ENCODE measurements at regions of chr5 and their contacts with region 1.

Region 1: GRCh38 chr5:55146543-55147151 is 13.3 kb upstream of the GPX8 start:
- DNase-seq: peak in 1 of 2 donors; percentile 87
- H3K4me3 ChIP-seq: no peak overlapping the region
- H3K27ac ChIP-seq: no peak overlapping the region
- H3K4me1 ChIP-seq: no peaks in the 10 kb centered on the region
- H3K27me3 ChIP-seq: no peaks in the 10 kb centered on the region
- CTCF ChIP-seq: peak; percentile 75 to 89 (median 88)

Region 2: DNA sequence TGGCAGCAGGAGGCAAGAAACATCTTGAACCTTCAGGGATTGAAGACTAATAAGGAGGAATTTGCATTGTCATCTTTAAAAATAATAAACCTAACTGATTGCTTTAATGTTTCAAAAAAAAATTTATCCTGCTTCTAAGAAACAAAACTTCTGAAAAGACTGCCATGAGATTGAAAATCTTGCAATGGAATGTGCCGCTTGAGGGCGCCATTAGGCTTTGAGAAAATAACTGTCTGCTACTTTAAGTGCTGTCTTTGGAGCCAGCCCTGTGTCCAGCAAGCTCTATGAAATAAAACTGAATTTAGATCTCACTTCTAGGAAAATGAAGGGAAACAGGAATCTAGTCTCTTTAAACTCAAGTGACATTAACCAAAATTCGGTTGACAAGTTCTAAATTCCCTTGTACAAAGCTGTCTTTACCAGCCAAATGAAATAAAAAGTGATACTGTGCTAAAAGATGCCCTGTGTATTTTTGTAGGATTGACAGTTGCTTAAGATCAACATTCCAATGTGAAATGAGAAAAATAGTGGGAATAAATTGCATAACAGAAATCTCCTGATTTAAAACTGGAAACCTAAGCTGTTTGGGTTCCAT is 240.6 kb before region 1 on chr5:
- intact Hi-C with region 1: loop called (anchors 1 kb)
- DNase-seq: peak in 1 of 2 donors; percentile 83
- H3K4me3 ChIP-seq: no peak overlapping the region
- H3K27ac ChIP-seq: no peak overlapping the region
- H3K4me1 ChIP-seq: peaks cover 0 to 11% of the 10 kb centered on the region in 2 donors
- H3K27me3 ChIP-seq: no peaks in the 10 kb centered on the region
- CTCF ChIP-seq: peak; percentile 41 to 79 (median 71)

Region 3: GRCh38 chr5:54944364-54944763 is 202.3 kb before region 1 on chr5:
- intact Hi-C with region 1: loop called (anchors 10 kb)
- DNase-seq: no peak
- H3K4me3 ChIP-seq: no peak overlapping the region
- H3K27ac ChIP-seq: no peak overlapping the region
- H3K4me1 ChIP-seq: no peaks in the 10 kb centered on the region
- H3K27me3 ChIP-seq: no peaks in the 10 kb centered on the region
- CTCF ChIP-seq: peak; percentile 27 to 63 (median 46)